GM13977 (cell line): ENCODE measurements at regions of chr11 and their contacts with region 1.

Region 1: DNA sequence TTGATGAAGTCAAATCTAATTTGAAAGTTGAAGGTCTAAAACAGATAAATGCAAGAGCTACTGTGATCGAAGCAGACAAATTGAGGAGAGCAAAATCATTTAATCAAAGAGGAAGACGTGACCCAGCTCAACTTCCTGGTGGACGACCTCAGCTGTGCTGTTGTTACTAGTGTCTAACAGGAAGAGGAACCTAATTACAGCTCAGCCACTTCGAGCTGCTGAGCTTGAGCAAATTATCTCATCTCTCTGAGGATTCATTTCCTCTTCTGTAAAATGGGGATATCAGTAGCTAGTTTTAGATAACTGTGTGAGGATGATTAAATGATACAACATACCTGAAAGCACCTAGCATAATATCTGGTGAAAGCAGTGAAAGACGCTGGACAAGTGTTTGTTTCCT is 48.6 kb upstream of the OLFML1 start:
- DNase-seq: peak; percentile 48
- CTCF ChIP-seq: no peak

Region 2: DNA sequence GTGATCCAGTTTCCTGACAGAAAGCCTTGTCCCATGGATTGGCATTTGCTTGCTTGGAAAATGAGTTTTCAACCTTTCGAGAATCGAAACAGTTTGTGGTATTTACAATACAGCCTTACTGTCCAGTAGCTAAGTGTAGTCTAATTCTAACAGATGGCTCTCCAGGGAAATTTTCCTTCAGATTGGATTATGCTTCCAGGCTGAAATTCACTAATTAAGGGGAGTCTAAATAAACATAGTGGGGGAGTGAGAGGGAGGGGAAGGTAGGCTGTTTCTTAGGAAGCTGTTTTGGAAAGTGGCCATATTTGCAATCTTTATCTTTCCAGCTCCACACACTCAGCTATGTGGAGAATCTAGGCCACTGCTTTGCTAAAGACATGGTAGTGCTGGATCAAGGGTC is 103.7 kb before region 1 on chr11:
- in situ Hi-C with region 1: no loop called
- DNase-seq: no peak
- CTCF ChIP-seq: no peak

Region 3: GRCh38 chr11:7353100-7353499 is 83.6 kb before region 1 on chr11:
- in situ Hi-C with region 1: loop called (anchors 10 kb)
- DNase-seq: peak; percentile 45
- CTCF ChIP-seq: peak; percentile 71

Region 4: GRCh38 chr11:7520981-7521487 is 84.4 kb after region 1 on chr11:
- in situ Hi-C with region 1: no loop called
- DNase-seq: peak; percentile 64
- CTCF ChIP-seq: no peak

Region 5: GRCh38 chr11:7804226-7804625 is 367.6 kb after region 1 on chr11:
- in situ Hi-C with region 1: no loop called
- DNase-seq: no peak
- CTCF ChIP-seq: no peak